Esophagus squamous epithelium (tissue), 5 donors: ENCODE measurements at regions of chr18 and their contacts with region 1.

Region 1: DNA sequence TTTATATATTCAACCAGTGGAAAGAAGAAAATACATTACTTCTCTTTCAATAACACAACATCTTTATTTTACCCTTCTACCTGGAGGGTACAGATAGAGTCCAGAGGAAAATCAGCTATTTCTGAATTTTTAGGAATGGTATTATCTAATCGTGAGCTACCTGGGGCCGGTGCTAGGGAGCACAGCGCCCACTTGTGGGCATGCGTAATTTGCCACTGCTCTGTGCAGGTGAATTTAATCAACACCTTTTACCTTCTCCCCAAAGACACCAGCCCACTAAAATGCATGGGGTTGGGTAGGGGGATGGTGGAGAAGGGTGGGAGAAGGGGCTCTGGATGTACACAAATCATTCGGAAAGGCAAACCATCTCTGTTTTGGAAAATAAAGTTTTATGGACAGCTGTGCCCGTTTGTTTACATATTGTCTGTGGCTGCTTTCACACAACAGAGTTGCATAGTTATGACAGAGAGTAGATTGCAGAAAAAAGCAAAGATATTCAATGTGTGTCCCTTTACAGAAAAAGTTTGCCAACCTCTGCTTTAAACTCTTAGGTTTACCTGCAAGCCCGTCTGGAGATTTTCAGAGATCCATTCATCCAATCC is 51.5 kb upstream of the DCC start:
- DNase-seq: no peak
- H3K4me3 ChIP-seq: no peak overlapping the region
- H3K27ac ChIP-seq: no peak overlapping the region
- H3K4me1 ChIP-seq: no peaks in the 10 kb centered on the region
- H3K27me3 ChIP-seq: no peaks in the 10 kb centered on the region
- CTCF ChIP-seq: peak in 4 of 6 experiments; percentile 30 to 44 (median 34)
- POLR2A ChIP-seq: no peak

Region 2: DNA sequence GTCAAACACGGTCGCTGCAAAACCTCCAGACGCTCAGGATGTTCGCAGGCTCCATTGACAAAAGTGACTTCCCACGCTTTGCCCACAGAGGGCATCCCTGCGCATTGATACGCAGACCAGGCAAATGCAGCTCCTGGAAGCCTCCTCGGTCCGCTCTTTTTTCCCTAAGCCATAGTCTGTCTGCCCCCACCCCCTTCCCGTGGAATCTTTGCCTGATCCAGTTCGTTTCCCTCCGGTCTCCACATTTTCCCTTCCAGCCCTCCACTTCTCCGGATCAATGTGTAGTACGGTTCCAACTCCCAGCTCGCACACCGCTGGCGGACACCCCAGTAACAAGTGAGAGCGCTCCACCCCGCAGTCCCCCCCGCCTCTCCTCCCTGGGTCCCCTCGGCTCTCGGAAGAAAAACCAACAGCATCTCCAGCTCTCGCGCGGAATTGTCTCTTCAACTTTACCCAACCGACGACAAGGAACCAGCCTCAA is 51.4 kb after region 1 on chr18 and contains the start of gene DCC:
- intact Hi-C with region 1: loop called (anchors 10 kb)
- DNase-seq: no peak
- H3K4me3 ChIP-seq: peak within 1 kb of the TSS in 3 of 4 donors; percentile 2 to 52 (median 27)
- H3K27ac ChIP-seq: no peak within 1 kb of the TSS
- H3K4me1 ChIP-seq: peaks cover 0 to 20% (median 0%) of the 10 kb centered on the region in 3 donors
- H3K27me3 ChIP-seq: peaks cover 0 to 50% (median 1%) of the 10 kb centered on the region in 4 donors
- CTCF ChIP-seq: peak in 1 of 6 experiments; percentile 20
- POLR2A ChIP-seq: no peak
- total RNA-seq, gene DCC: 0.06 to 0.95 TPM in 2 of 4 donors, not detected in the others